Sigmoid colon (tissue), 7 donors: ENCODE measurements at regions of chr6 and their contacts with region 1.

Region 1: DNA sequence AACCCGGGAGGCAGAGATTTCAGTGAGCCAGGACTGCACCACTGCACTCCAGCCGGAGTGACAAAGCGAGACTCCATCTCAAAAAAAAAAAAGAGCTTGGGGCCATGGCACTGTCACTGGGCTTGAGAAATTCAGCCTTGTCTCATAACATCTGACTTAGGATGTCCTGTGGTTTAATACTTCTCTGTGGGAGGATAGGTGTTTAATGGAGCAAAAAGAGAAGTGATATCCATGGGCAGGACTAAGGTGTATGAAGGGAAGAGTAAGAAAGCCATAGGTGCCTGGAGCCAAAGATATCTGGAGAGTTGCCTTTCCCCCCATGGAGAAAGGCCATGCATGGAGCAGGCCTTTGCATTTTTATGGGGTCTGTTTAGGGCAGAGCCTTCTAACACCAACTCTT is 11.2 kb downstream of the BMP6 start:
- DNase-seq: no peak
- H3K4me3 ChIP-seq: no peak overlapping the region
- H3K27ac ChIP-seq: no peak overlapping the region
- H3K4me1 ChIP-seq: no peaks in the 10 kb centered on the region
- H3K27me3 ChIP-seq: peaks cover 0 to 17% (median 9%) of the 10 kb centered on the region in 3 donors
- CTCF ChIP-seq: no peak
- EP300 ChIP-seq: no peak
- POLR2A ChIP-seq: no peak

Region 2: DNA sequence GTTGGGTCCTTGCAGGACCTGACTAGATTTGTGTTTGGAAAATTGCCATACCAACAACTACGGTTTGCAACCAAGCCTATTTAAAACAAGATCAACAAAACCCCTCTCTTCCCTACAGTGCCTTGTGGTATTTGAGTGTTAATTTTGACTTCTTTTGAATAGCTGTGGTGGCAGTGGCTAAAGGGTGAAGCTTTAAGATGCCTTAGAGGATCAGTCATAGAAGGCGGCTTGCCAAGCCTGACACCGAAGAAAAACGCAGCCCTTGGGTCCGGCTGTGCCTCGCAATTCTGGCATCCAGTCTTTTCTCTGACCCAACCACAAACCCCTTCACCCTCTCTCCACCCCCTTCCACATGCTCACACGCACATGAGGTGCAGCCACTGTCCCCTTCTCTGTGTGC is 21.4 kb after region 1 on chr6:
- intact Hi-C with region 1: loop called (anchors 2 kb)
- DNase-seq: no peak
- H3K4me3 ChIP-seq: no peak overlapping the region
- H3K27ac ChIP-seq: no peak overlapping the region
- H3K4me1 ChIP-seq: peaks cover 0 to 7% (median 0%) of the 10 kb centered on the region in 4 donors
- H3K27me3 ChIP-seq: no peaks in the 10 kb centered on the region
- CTCF ChIP-seq: no peak
- EP300 ChIP-seq: no peak
- POLR2A ChIP-seq: no peak